ENCODE measurements at regions of chr2 and their contacts with region 1.

Region 1: DNA sequence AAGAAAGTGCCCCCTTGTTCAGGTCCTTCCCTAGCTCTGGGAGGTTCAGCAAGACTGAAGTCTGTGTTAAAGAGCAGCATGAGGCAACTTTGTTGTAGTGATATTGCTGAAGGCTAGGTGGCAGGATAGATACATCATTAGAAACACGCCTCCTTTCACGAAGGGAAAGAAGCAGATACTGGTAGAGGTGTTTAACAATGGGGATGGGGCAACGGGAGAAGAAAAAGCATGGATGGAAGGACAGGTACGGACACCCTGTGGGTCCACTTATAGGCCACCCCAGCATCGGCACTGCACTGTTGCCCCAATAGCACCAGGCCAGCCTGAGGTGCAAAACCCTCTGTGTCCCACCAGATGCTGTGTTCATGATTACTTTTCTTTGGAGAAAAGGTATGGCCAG is 3.5 kb upstream of the IGFBP5 start:
- DNase-seq: no peak
- ATAC-seq: peak; percentile 38

Region 2: DNA sequence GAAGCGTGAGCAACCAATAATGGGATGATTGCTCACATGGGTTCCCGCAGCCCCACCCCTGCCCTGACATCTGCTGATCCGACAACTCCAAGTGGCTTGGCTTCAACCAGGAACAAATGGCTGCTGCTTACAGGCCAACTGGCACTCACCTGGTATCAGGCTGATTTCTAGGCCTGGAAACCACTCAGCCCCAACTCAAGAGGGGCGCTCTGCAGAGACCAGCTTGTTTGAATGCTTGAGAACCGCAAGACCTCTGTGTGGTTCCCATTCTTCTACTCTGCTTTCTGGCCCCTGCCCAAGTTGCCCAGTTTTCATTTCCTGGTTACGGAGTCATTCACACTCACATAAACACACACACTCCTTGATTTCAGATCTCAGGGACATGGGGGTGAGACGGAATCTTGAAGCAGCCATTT is 109.0 kb after region 1 on chr2:
- intact Hi-C with region 1: loop called (anchors 10 kb)
- DNase-seq: peak; percentile 56
- ATAC-seq: peak; percentile 59

Region 3: GRCh38 chr2:217166241-217166850 is 467.5 kb after region 1 on chr2:
- intact Hi-C with region 1: loop called (anchors 2 kb)
- DNase-seq: no peak
- ATAC-seq: peak; percentile 82